KBM-7 (cell line): ENCODE measurements at regions of chr4 and their contacts with region 1.

Region 1: GRCh38 chr4:24686871-24687680 is 102.7 kb upstream of the DHX15 start:
- DNase-seq: peak; percentile 52

Region 2: GRCh38 chr4:24488399-24489164 is 198.5 kb before region 1 on chr4:
- in situ Hi-C with region 1: loop called (anchors 25 kb)
- DNase-seq: peak; percentile 73